PC-3 (cell line): ENCODE measurements at regions of chr11 and their contacts with region 1.

Region 1: DNA sequence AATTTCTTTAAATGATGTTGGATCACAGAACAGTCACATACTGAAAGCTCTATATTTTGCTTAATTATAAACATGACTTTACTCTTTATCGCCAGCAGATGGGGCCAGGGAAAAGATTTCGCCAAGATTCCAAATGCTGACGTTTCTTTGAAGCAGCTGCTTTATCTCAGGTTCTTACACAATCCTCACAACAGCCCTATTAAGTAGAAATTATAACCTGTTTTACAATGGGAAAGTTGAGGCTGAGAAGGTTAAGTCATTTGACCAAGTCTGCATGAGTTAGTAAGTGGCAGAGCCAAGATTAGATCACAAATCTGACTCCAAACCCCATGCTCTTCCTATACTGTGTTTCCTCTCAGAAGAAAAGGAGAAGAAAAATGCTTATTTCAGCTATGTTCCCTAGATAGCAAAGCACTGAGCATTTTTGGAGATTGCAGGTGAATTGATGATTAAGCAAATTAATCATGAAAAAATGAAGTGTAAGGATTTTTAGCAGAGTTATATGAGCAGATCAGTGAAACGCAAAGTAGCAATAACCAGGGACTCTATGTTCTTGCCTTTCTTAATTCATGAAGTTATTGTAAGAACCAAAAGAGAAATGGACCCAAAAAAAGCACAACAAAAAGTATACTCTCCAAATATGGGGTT is 79.0 kb downstream of the AASDHPPT start:
- DNase-seq: peak; percentile 76
- ATAC-seq: peak; percentile 59
- H3K4me3 ChIP-seq: no peak overlapping the region
- H3K27ac ChIP-seq: no peak overlapping the region
- H3K4me1 ChIP-seq: no peaks in the 10 kb centered on the region
- H3K27me3 ChIP-seq: no peaks in the 10 kb centered on the region
- CTCF ChIP-seq: peak; percentile 85

Region 2: DNA sequence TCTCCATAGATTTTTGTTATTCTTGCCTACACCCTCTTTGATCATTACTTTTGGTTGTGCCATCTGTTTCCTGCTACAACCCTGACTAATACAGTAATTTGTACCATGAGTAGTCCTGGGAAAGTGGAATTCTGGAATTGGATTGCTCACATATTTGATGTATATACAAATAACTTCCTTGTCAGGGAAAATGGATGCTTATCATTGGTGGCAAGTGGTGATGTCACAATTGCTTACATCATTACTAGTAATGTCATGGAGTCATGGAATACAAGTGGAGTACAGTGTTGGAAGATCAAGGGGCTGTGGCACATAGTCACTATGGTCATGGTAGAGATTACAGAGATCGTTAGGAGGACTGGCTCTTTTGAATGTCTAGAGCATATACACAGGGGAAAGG is 54.6 kb before region 1 on chr11:
- CTCF ChIA-PET with region 1: no interaction called
- POLR2A ChIA-PET with region 1: no interaction called
- intact Hi-C with region 1: no loop called
- DNase-seq: no peak
- ATAC-seq: no peak
- H3K4me3 ChIP-seq: no peak overlapping the region
- H3K27ac ChIP-seq: no peak overlapping the region
- H3K4me1 ChIP-seq: no peaks in the 10 kb centered on the region
- H3K27me3 ChIP-seq: no peaks in the 10 kb centered on the region
- CTCF ChIP-seq: no peak

Region 3: GRCh38 chr11:106193966-106194365 is 37.6 kb after region 1 on chr11:
- CTCF ChIA-PET with region 1: no interaction called
- POLR2A ChIA-PET with region 1: no interaction called
- intact Hi-C with region 1: loop called (anchors 1 kb)
- DNase-seq: no peak
- ATAC-seq: no peak
- H3K4me3 ChIP-seq: no peak overlapping the region
- H3K27ac ChIP-seq: no peak overlapping the region
- H3K4me1 ChIP-seq: peaks cover 15% of the 10 kb centered on the region
- H3K27me3 ChIP-seq: no peaks in the 10 kb centered on the region
- CTCF ChIP-seq: no peak

Region 4: GRCh38 chr11:106276859-106277436 is 120.5 kb after region 1 on chr11:
- CTCF ChIA-PET with region 1: no interaction called
- POLR2A ChIA-PET with region 1: no interaction called
- intact Hi-C with region 1: loop called (anchors 5 kb)
- DNase-seq: peak; percentile 62
- ATAC-seq: peak; percentile 61
- H3K4me3 ChIP-seq: no peak overlapping the region
- H3K27ac ChIP-seq: no peak overlapping the region
- H3K4me1 ChIP-seq: peaks cover 28% of the 10 kb centered on the region
- H3K27me3 ChIP-seq: no peaks in the 10 kb centered on the region
- CTCF ChIP-seq: peak; percentile 87

Region 5: DNA sequence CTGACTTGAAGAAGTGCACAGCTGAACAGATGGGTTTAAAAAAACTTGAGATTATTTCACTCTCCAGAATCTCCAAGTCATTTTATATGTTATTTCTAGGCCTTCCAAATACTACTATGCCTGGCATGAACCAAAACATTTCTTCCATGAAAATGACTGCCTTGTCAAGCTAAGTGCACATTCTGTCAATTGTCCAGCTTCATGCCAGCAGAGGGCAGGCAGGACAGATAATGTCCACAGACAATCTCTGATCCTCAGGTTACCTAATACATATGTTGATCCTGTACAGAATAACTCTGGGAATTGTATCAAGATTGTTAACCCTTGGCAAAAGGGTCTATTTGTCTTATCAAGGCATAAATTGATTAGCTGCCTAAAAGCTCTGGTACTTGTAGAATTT is 150.5 kb after region 1 on chr11:
- CTCF ChIA-PET with region 1: interaction called, 7 read pairs
- POLR2A ChIA-PET with region 1: no interaction called
- intact Hi-C with region 1: loop called (anchors 2 kb)
- DNase-seq: peak; percentile 44
- ATAC-seq: peak; percentile 82
- H3K4me3 ChIP-seq: no peak overlapping the region
- H3K27ac ChIP-seq: no peak overlapping the region
- H3K4me1 ChIP-seq: peaks cover 10% of the 10 kb centered on the region
- H3K27me3 ChIP-seq: no peaks in the 10 kb centered on the region
- CTCF ChIP-seq: peak; percentile 62

Region 6: GRCh38 chr11:106585061-106585460 is 428.6 kb after region 1 on chr11:
- CTCF ChIA-PET with region 1: interaction called, 3 read pairs
- POLR2A ChIA-PET with region 1: no interaction called
- intact Hi-C with region 1: loop called (anchors 1 kb)
- DNase-seq: peak; percentile 77
- ATAC-seq: peak; percentile 95
- H3K4me3 ChIP-seq: no peak overlapping the region
- H3K27ac ChIP-seq: no peak overlapping the region
- H3K4me1 ChIP-seq: no peaks in the 10 kb centered on the region
- H3K27me3 ChIP-seq: no peaks in the 10 kb centered on the region
- CTCF ChIP-seq: peak; percentile 88

Region 7: GRCh38 chr11:107043242-107044006 is 887.0 kb after region 1 on chr11:
- CTCF ChIA-PET with region 1: no interaction called
- POLR2A ChIA-PET with region 1: no interaction called
- intact Hi-C with region 1: loop called (anchors 5 kb)
- DNase-seq: peak; percentile 81
- ATAC-seq: peak; percentile 73
- H3K4me3 ChIP-seq: no peak overlapping the region
- H3K27ac ChIP-seq: peak overlapping the region; percentile 20
- H3K4me1 ChIP-seq: peaks cover 19% of the 10 kb centered on the region
- H3K27me3 ChIP-seq: no peaks in the 10 kb centered on the region
- CTCF ChIP-seq: no peak